AG04450 (cell line): ENCODE measurements at regions of chr1 and their contacts with region 1.

Region 1: GRCh38 chr1:27179379-27179778 is 24.5 kb upstream of the SLC9A1 start:
- DNase-seq: no peak
- H3K4me3 ChIP-seq: no peak overlapping the region
- H3K27ac ChIP-seq: no peak overlapping the region
- H3K27me3 ChIP-seq: no peaks in the 10 kb centered on the region
- CTCF ChIP-seq: no peak

Region 2: DNA sequence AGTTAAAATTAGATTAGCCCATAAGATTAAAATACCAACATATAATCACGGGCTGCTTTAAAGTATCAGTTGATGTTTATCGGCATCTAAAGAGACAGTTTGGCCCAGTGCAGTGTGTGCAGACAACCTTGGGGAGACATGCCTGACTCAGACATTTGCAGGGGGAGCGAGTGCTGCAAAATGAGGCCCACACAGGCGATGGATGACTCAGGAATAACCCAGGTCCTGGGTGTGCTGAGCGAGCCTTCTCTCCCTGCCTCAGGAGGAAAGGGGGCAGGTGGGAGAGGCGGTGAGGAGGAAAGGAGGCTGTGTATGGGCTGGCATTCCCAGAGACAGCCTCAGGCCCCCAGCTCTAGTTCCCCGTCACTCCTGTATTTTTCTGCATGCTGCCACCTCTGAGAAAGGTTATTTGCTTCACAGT is 33.4 kb before region 1 on chr1:
- CTCF ChIA-PET with region 1: no interaction called
- POLR2A ChIA-PET with region 1: no interaction called
- DNase-seq: peak; percentile 61
- H3K4me3 ChIP-seq: no peak overlapping the region
- H3K27ac ChIP-seq: peak overlapping the region; percentile 84
- H3K27me3 ChIP-seq: no peaks in the 10 kb centered on the region
- CTCF ChIP-seq: no peak

Region 3: GRCh38 chr1:27161594-27161993 is 17.8 kb before region 1 on chr1:
- CTCF ChIA-PET with region 1: no interaction called
- POLR2A ChIA-PET with region 1: interaction called, 11 read pairs
- DNase-seq: no peak
- H3K4me3 ChIP-seq: no peak overlapping the region
- H3K27ac ChIP-seq: no peak overlapping the region
- H3K27me3 ChIP-seq: no peaks in the 10 kb centered on the region
- CTCF ChIP-seq: no peak

Region 4: GRCh38 chr1:27234049-27234882 is 54.9 kb after region 1 on chr1 and contains the start of gene WDTC1:
- CTCF ChIA-PET with region 1: no interaction called
- POLR2A ChIA-PET with region 1: no interaction called
- DNase-seq: peak; percentile 92
- H3K4me3 ChIP-seq: peak within 1 kb of the TSS; percentile 72
- H3K27ac ChIP-seq: peak within 1 kb of the TSS; percentile 11
- H3K27me3 ChIP-seq: no peaks in the 10 kb centered on the region
- CTCF ChIP-seq: no peak
- polyA plus RNA-seq, gene WDTC1: 7.1 and 9.2 TPM in 2 replicates

Region 5: GRCh38 chr1:27253596-27253995 is 74.2 kb after region 1 on chr1:
- CTCF ChIA-PET with region 1: no interaction called
- POLR2A ChIA-PET with region 1: no interaction called
- DNase-seq: no peak
- H3K4me3 ChIP-seq: no peak overlapping the region
- H3K27ac ChIP-seq: no peak overlapping the region
- H3K27me3 ChIP-seq: no peaks in the 10 kb centered on the region
- CTCF ChIP-seq: no peak

Region 6: GRCh38 chr1:27300341-27301051 is 121.1 kb after region 1 on chr1:
- CTCF ChIA-PET with region 1: no interaction called
- POLR2A ChIA-PET with region 1: no interaction called
- DNase-seq: peak; percentile 93
- H3K4me3 ChIP-seq: peak overlapping the region; percentile 29; the same call in 1 of the 2 replicates
- H3K27ac ChIP-seq: peak overlapping the region; percentile 97
- H3K27me3 ChIP-seq: no peaks in the 10 kb centered on the region
- CTCF ChIP-seq: peak; percentile 96